HCT116 (cell line): ENCODE measurements at regions of chr6 and their contacts with region 1.

Region 1: GRCh38 chr6:142112451-142113061 is 20.2 kb upstream of the GJE1 start:
- DNase-seq: peak; percentile 74
- ATAC-seq: peak; percentile 67
- H3K4me3 ChIP-seq: no peak overlapping the region
- H3K27ac ChIP-seq: no peak overlapping the region
- H3K4me1 ChIP-seq: no peaks in the 10 kb centered on the region
- H3K27me3 ChIP-seq: no peaks in the 10 kb centered on the region
- CTCF ChIP-seq: peak; percentile 71 to 86 (median 77)
- POLR2A ChIP-seq: no peak
- RAD21 ChIP-seq: peak; percentile 93

Region 2: GRCh38 chr6:141610736-141611135 is 501.8 kb before region 1 on chr6:
- CTCF ChIA-PET with region 1: interaction called, 6 read pairs
- POLR2A ChIA-PET with region 1: no interaction called
- RAD21 ChIA-PET with region 1: no interaction called
- intact Hi-C with region 1: loop called (anchors 10 kb)
- DNase-seq: peak; percentile 10
- ATAC-seq: peak; percentile 75
- H3K4me3 ChIP-seq: no peak overlapping the region
- H3K27ac ChIP-seq: no peak overlapping the region
- H3K4me1 ChIP-seq: no peaks in the 10 kb centered on the region
- H3K27me3 ChIP-seq: no peaks in the 10 kb centered on the region
- CTCF ChIP-seq: peak in 2 of 3 experiments; percentile 34 to 48; a peak in 4 of 6 replicates
- POLR2A ChIP-seq: no peak
- RAD21 ChIP-seq: peak; percentile 31; the same call in 1 of the 2 replicates

Region 3: GRCh38 chr6:141677598-141678211 is 434.9 kb before region 1 on chr6:
- CTCF ChIA-PET with region 1: interaction called, 5 read pairs
- POLR2A ChIA-PET with region 1: no interaction called
- RAD21 ChIA-PET with region 1: no interaction called
- intact Hi-C with region 1: loop called (anchors 1 kb)
- DNase-seq: peak; percentile 40
- ATAC-seq: peak; percentile 70
- H3K4me3 ChIP-seq: no peak overlapping the region
- H3K27ac ChIP-seq: no peak overlapping the region
- H3K4me1 ChIP-seq: 0 out of 4 replicates have a peak, but pooled peaks cover 0 to 3% of the 10 kb centered on the region in 2 experiments
- H3K27me3 ChIP-seq: no peaks in the 10 kb centered on the region
- CTCF ChIP-seq: peak; percentile 60 to 74 (median 67); a peak in 5 of 6 replicates
- POLR2A ChIP-seq: no peak
- RAD21 ChIP-seq: peak; percentile 72

Region 4: DNA sequence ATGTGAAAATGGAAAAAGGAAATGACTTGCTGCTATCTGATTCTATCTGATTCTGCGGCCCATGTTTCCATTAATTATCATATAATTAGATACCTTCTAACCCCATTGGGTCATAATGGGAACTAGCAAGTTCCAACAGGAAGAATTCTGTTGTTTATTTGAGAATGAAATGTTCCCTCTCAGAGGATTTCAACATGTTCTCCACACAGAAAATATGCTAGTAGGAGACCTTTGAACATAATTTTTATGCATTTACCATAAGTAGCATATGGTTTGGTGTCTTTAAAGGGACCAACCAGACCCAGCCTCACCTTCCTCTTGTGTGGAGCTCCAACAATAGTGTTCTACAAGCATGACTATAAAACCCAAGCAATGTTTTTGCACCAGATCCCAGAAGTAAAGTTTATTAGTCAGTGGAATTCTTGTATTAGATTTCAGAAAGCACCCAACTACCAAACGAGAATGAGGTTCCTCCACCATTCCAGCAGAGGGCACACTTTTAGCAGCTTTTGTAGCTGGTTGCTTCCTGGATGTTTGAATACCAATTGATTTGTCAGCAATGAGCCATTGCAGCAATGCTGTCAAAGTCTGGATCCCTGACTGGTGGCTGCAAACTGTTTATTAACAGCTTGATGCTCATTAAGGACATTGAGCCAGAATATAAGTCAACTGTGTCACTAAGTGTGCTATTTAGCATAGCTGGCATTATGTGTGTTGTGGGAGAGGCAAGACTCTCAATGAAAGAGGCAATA is 123.4 kb before region 1 on chr6:
- CTCF ChIA-PET with region 1: interaction called, 22 read pairs
- POLR2A ChIA-PET with region 1: no interaction called
- RAD21 ChIA-PET with region 1: interaction called in 1 of 2 experiments, 4 read pairs
- intact Hi-C with region 1: loop called (anchors 1 kb)
- DNase-seq: peak; percentile 78
- ATAC-seq: peak; percentile 87
- H3K4me3 ChIP-seq: no peak overlapping the region
- H3K27ac ChIP-seq: 0 out of 2 replicates have a peak overlapping the region, but pooled peaks have one; percentile 18
- H3K4me1 ChIP-seq: peaks cover 0 to 9% of the 10 kb centered on the region in 2 experiments; a peak in 3 of 4 replicates
- H3K27me3 ChIP-seq: no peaks in the 10 kb centered on the region
- CTCF ChIP-seq: peak; percentile 82 to 94 (median 87)
- POLR2A ChIP-seq: no peak
- RAD21 ChIP-seq: peak; percentile 97

Region 5: GRCh38 chr6:142374965-142375733 is 262.6 kb after region 1 on chr6:
- CTCF ChIA-PET with region 1: no interaction called
- POLR2A ChIA-PET with region 1: no interaction called
- RAD21 ChIA-PET with region 1: no interaction called
- intact Hi-C with region 1: no loop called
- DNase-seq: peak; percentile 85
- ATAC-seq: peak; percentile 61
- H3K4me3 ChIP-seq: peak overlapping the region in 1 of 2 experiments; percentile 37; a peak in 2 of 4 replicates
- H3K27ac ChIP-seq: peak overlapping the region; percentile 92
- H3K4me1 ChIP-seq: peaks cover 81 to 84% of the 10 kb centered on the region in 2 experiments
- H3K27me3 ChIP-seq: no peaks in the 10 kb centered on the region
- CTCF ChIP-seq: no peak
- POLR2A ChIP-seq: no peak
- RAD21 ChIP-seq: peak; percentile 12; the same call in 1 of the 2 replicates

Region 6: DNA sequence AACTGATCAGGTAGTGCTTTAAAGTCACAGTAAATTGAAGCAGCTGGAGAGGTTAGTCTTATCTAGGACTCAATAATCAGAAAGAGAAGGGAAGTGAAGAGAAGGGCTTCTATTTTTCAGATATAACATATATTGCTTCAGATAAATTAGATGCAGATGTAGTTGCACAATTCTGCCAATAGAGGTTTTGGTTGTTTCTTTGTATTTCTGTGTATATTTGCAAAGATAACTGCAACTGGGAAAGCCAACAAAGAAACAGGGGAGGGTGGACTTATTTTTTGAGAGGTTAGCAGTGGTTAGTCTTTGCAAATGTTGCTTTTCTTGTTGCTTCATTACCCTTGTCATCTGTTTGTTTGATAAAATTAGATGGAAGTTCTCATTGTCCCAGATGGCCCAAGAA is 295.9 kb after region 1 on chr6:
- CTCF ChIA-PET with region 1: no interaction called
- POLR2A ChIA-PET with region 1: no interaction called
- RAD21 ChIA-PET with region 1: no interaction called
- intact Hi-C with region 1: no loop called
- DNase-seq: no peak
- ATAC-seq: peak; percentile 38; the same call in 1 of the 2 replicates
- H3K4me3 ChIP-seq: no peak overlapping the region
- H3K27ac ChIP-seq: no peak overlapping the region
- H3K4me1 ChIP-seq: peaks cover 10 to 14% of the 10 kb centered on the region in 2 experiments
- H3K27me3 ChIP-seq: no peaks in the 10 kb centered on the region
- CTCF ChIP-seq: peak in 2 of 3 experiments; percentile 10 to 34; a peak in 2 of 6 replicates
- POLR2A ChIP-seq: no peak
- RAD21 ChIP-seq: no peak